ENCODE measurements at regions of chr19 and their contacts with region 1.

Region 1: DNA sequence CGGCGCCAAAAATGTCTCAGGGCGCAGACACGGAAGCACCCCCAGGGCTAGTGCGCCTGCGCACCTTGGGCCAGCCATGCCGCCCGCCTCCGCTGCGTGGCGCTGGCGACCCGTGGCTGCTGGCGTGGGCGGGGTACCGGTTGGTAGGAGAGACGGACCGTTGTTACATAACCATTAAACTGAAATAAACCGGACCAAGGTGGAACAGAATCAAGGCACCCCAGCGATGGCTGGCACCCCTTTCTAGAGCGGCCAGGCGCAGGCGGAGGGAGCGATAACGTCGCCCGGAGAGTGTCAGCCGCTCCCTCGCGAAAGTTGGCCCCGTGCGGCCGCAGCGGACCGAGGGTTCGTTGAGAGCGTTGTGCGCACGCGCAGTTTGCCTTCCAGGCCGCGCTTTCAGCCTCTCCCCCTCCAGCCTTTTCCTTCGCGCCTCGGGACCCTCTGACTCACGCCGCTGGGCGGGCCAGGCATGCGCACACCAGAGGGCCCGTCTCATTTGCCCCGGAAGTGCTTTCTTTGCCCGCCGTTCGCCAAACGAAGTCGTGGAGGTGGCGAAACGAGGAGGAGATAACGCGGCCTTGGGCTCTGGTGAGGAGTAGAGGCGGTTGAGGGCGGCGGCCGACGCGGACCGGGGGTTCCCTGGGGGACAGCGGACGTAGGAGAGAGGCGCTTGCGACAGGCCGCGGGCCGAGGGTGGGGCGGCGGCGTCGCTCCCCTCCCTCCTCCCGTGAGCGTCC is at the starts of genes PLEKHJ1 and SF3A2:
- DNase-seq: peak; percentile 100
- ATAC-seq: peak; percentile 90
- H3K4me3 Mint-ChIP-seq: peak within 1 kb of the TSS; percentile 100
- H3K27ac Mint-ChIP-seq: peak within 1 kb of the TSS; percentile 100
- H3K4me1 Mint-ChIP-seq: peaks cover 46% of the 10 kb centered on the region
- H3K27me3 Mint-ChIP-seq: no peaks in the 10 kb centered on the region
- total RNA-seq, gene PLEKHJ1: 69.8 to 71.3 TPM
- total RNA-seq, gene SF3A2: 171 TPM

Region 2: DNA sequence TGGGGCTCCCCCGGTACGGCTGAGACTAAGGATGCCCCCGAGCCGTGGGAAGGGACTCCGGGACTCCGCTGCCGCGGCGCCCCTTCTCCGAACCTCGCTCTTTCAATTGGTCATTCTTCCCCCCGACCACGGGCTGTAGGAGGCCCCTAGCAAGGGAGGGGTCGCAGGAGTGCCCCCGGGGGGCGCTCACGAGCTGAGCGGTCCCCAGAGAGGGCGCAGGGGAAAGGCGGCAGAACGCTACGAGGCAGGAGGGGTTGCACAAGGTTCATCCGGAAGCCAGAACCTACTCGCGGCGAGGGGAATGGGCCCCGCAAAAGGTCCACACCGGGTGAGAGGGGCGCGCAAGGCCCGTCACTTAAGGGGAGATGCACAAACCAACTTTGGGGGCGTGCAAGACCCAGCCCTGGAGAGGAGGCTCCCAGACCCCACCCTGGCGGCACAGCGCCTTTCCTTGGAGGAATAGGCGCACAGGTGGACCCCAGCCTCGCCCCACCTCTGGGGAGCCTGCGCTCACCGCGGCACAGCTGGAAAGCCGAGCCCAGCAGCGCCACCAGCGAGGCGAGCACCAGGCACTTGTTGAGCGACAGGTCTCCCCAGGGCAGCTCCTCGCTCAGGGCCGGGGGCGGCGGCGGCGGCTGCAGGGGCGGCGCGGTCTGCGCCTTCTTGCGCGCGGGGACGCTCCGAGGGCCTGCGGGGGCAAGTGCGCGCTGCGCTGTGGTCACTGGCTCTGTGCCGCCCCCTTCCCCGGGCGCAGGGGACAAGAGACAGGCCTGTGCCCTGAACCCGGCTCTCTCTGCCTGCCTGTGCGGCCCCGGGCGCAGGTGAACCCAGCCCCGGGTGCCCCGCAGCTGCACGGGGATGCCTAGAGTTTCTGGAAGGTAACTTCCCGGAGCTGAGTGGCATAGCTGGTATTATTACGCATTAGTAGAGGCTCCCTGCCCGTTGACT is 16.9 kb after region 1 on chr19:
- POLR2A ChIA-PET with region 1: interaction called, 12 read pairs
- DNase-seq: peak; percentile 67
- ATAC-seq: peak; percentile 37
- H3K4me3 Mint-ChIP-seq: peak overlapping the region; percentile 58
- H3K27ac Mint-ChIP-seq: no peak overlapping the region
- H3K4me1 Mint-ChIP-seq: peaks cover 10% of the 10 kb centered on the region
- H3K27me3 Mint-ChIP-seq: peaks cover 22% of the 10 kb centered on the region

Region 3: DNA sequence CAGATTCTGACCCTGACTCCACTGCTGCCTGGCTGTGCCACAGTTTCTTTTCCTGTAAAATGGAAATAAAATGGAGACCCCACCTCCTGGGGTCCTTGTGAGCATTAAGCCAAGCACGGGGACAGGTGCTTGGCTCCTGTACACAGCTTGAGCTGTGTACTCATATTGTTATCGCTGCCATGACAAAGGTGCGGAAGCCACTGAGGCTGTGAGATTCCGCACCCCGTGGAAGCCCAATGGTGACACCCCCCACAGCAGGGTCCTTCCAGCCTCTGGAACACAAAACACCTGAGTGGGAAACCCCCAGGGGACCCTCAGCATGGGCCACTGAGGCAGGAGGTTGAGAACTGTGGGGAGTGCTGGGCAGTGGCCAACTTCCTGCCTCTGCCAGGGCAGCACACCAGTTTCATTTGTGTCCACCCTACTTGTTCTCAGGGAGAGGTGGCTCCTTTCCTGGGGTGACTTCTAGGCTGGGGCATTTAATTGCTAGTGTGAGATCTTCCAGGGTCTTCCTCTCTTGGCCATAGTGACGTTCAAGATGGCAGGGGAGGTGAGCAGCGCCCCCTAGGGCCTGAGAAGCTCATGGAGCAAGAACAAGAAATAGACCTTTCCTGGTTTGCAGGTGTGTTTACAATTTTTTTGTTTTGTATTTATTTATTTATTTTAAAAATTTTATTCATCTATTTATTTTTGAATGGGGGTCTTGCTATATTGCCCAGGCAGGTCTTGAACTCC is 25.1 kb after region 1 on chr19:
- POLR2A ChIA-PET with region 1: interaction called, 15 read pairs
- DNase-seq: peak; percentile 76
- ATAC-seq: peak; percentile 43
- H3K4me3 Mint-ChIP-seq: no peak overlapping the region
- H3K27ac Mint-ChIP-seq: no peak overlapping the region
- H3K4me1 Mint-ChIP-seq: peaks cover 20% of the 10 kb centered on the region
- H3K27me3 Mint-ChIP-seq: no peaks in the 10 kb centered on the region

Region 4: GRCh38 chr19:2269244-2269947 is 32.9 kb after region 1 on chr19:
- POLR2A ChIA-PET with region 1: interaction called, 71 read pairs
- DNase-seq: peak; percentile 100
- ATAC-seq: peak; percentile 67
- H3K4me3 Mint-ChIP-seq: peak overlapping the region; percentile 90
- H3K27ac Mint-ChIP-seq: peak overlapping the region; percentile 92
- H3K4me1 Mint-ChIP-seq: peaks cover 31% of the 10 kb centered on the region
- H3K27me3 Mint-ChIP-seq: no peaks in the 10 kb centered on the region